ENCODE measurements at regions of chr4 and their contacts with region 1.

Region 1: DNA sequence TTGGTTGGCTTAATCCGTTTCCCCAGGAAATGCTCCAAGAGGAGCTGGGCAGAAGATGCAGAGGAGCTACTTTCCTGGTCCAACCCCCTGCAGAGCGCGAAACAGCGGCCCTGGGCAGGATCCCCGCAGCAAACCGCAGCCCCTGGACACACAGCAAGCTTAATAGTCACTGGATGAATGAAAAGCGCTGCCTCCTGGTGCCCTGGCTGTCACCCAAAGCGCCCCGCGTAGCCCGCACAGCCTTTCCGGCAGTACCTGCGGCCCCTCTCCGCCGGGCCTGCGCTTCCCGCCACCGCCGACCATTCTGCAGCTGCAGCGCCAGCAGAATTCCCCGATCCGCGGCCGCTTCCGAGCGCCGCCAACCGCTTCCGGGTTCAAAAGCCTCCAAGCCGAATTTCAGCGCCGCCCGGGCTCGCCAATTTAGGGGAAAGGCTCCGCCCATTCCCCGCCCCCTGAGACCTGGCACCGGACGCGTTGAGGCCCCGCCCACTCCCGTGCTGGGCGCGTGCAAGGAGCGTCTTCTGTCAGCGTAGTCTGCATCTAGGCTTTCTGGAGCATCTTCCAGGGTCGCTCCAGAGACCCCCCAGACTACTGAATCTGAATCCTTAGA is at the start of gene HPF1:
- DNase-seq: peak; percentile 84 to 99 (median 94)
- ATAC-seq: peak; percentile 98
- H3K4me3 ChIP-seq: peak within 1 kb of the TSS; percentile 69 to 82
- H3K27ac ChIP-seq: peak within 1 kb of the TSS in 1 of 2 donors; percentile 76
- H3K4me1 ChIP-seq: peaks cover 9 to 20% of the 10 kb centered on the region in 2 donors
- H3K27me3 ChIP-seq: no peaks in the 10 kb centered on the region
- CTCF ChIP-seq: peak in 1 of 2 donors; percentile 17
- polyA plus RNA-seq, gene HPF1: 41.0 to 51.3 (median 46.8) TPM

Region 2: DNA sequence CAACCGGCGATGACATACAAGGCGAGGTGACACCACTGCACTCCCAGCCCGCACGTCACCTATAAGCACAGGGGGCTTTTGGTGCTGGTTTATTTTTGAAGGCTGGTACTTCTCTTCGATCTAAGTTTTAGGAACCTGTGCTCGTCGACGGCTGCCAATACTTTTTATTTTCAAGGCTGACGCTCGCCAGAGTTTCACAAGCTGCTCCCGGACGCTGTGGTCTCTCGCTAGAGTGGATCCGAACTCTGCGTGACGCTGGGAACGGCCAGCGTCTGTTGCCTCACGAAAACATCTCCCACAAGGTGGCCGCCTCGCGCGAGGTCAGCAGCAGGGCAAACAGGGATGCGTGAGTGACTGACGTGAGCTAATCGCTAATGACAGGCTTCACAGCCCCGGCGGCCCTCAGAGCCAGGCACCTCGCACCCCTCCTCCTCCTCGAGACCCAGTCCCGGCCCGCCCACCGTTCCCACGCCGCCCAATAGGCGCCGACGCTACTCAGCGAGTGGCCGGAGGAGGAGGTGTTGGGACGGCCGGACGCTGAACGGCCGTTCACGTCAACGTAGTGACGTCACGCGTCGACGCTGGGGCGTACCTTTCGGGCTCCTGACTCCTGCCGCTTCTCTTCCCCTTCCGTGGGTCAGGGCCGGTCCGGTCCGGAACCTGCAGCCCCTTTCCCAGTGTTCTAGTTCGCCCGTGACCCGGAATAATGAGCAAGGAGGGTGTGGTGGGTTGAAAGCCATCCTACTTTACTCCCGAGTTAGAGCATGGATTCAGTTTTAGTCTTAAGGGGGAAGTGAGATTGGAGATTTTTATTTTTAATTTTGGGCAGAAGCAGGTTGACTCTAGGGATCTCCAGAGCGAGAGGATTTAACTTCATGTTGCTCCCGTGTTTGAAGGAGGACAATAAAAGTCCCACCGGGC is 137.5 kb before region 1 on chr4 and contains the start of gene CLCN3:
- intact Hi-C with region 1: loop called in 1 of 2 experiments (anchors 10 kb)
- DNase-seq: peak; percentile 97 to 100 (median 100)
- ATAC-seq: peak; percentile 98
- H3K4me3 ChIP-seq: peak within 1 kb of the TSS; percentile 50 to 74
- H3K27ac ChIP-seq: peak within 1 kb of the TSS; percentile 93 to 95
- H3K4me1 ChIP-seq: peaks cover 4 to 28% of the 10 kb centered on the region in 2 donors
- H3K27me3 ChIP-seq: no peaks in the 10 kb centered on the region
- CTCF ChIP-seq: peak in 1 of 2 donors; percentile 27
- polyA plus RNA-seq, gene CLCN3: 61.1 to 78.2 (median 66.6) TPM

Region 3: DNA sequence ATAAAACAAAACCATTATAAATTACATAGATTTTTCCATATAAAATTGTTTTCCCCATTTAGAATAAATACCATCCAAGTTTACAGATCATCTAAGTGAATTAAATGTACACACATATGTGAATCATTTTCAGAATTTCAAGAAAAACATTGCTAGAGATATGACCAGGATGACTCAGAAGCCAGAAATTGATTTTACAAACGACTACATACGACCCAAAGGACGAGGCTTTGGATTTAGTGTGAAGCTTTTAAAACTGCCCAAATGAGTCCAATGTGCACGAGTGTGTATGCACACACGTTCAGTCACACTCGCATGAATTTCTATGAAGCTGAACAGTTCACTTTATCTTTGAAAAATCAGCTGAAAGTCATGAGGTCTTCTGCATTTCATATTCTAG is 230.6 kb after region 1 on chr4:
- intact Hi-C with region 1: no loop called
- DNase-seq: no peak
- ATAC-seq: no peak
- H3K4me3 ChIP-seq: no peak overlapping the region
- H3K27ac ChIP-seq: no peak overlapping the region
- H3K4me1 ChIP-seq: no peaks in the 10 kb centered on the region
- H3K27me3 ChIP-seq: no peaks in the 10 kb centered on the region
- CTCF ChIP-seq: no peak

Measured in left lung (tissue), 14 donors.